ENCODE measurements at regions of chr9 and their contacts with region 1.

Region 1: DNA sequence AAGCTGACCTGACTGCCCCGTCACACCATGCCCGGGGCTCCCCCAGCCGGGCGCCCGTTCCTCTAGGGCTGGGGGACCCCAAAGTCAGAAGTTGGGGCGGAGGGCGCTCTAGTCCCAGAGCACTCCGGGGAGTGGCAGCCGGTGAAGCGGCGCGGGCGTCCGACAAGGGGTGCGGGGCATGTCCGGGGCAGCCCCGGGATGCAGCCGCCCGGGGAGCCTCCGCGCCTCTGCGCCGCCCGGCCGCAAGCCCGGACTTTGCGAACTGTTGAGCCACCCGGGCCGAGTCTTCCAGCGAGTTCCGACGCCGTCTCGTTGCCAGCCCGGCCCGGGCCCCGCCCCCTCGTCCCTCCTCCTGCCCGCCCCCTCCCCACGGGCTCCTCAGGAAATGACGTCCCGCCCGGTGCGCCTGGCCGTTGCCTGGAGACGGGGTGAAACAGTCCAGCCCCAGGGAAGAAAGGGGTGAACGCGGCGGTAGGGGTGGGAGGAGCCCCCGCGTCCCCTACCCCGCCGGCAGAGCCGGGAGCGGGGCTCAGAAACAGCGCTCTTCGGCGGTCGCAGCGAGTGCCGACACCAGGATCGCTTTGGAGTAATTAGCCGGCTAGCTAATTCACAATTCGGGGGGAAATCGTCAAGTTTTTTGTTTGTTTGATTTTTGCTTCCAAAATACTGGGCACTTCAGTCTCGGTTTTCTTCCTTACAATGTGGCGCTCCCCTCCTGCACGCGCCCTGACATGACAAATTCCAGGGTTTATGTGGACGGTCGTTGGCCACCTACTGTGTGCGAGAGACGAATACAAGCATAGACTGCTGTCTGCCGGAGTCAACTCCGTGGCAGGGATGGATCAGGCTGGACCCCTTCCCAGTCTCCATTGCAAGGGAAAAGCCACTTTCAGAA is at the start of gene WHRN:
- DNase-seq: peak; percentile 90 to 97 (median 92)
- H3K4me3 ChIP-seq: peak within 1 kb of the TSS; percentile 70
- H3K4me3 Mint-ChIP-seq: peak within 1 kb of the TSS; percentile 84 to 95 (median 88)
- H3K27ac ChIP-seq: peak within 1 kb of the TSS; percentile 76
- H3K27ac Mint-ChIP-seq: peak within 1 kb of the TSS; percentile 82 to 97 (median 95)
- H3K4me1 ChIP-seq: peaks cover 18% of the 10 kb centered on the region
- H3K4me1 Mint-ChIP-seq: peaks cover 40 to 56% (median 53%) of the 10 kb centered on the region in 3 donors
- H3K27me3 ChIP-seq: peaks cover 9% of the 10 kb centered on the region
- H3K27me3 Mint-ChIP-seq: peaks cover 0 to 16% of the 10 kb centered on the region in 2 donors
- total RNA-seq, gene WHRN: 8.6 to 9.0 TPM

Region 2: GRCh38 chr9:114327749-114328148 is 177.7 kb before region 1 on chr9:
- CTCF ChIA-PET with region 1: no interaction called
- POLR2A ChIA-PET with region 1: no interaction called
- DNase-seq: no peak
- H3K4me3 ChIP-seq: no peak overlapping the region
- H3K4me3 Mint-ChIP-seq: no peak overlapping the region
- H3K27ac ChIP-seq: no peak overlapping the region
- H3K27ac Mint-ChIP-seq: no peak overlapping the region
- H3K4me1 ChIP-seq: no peaks in the 10 kb centered on the region
- H3K4me1 Mint-ChIP-seq: peaks cover 18 to 23% (median 22%) of the 10 kb centered on the region in 3 donors
- H3K27me3 ChIP-seq: no peaks in the 10 kb centered on the region
- H3K27me3 Mint-ChIP-seq: peaks cover 0 to 4% of the 10 kb centered on the region in 2 donors

Region 3: GRCh38 chr9:114385412-114386181 is 119.8 kb before region 1 on chr9:
- CTCF ChIA-PET with region 1: interaction called, 7 read pairs
- POLR2A ChIA-PET with region 1: interaction called, 11 read pairs
- DNase-seq: peak; percentile 80 to 95 (median 94)
- H3K4me3 ChIP-seq: peak overlapping the region; percentile 98
- H3K4me3 Mint-ChIP-seq: peak overlapping the region; percentile 92 to 99 (median 96)
- H3K27ac ChIP-seq: peak overlapping the region; percentile 96
- H3K27ac Mint-ChIP-seq: peak overlapping the region; percentile 93 to 100 (median 98)
- H3K4me1 ChIP-seq: peaks cover 74% of the 10 kb centered on the region
- H3K4me1 Mint-ChIP-seq: peaks cover 67 to 83% (median 71%) of the 10 kb centered on the region in 3 donors
- H3K27me3 ChIP-seq: no peaks in the 10 kb centered on the region
- H3K27me3 Mint-ChIP-seq: peaks cover 0 to 7% of the 10 kb centered on the region in 2 donors

Region 4: DNA sequence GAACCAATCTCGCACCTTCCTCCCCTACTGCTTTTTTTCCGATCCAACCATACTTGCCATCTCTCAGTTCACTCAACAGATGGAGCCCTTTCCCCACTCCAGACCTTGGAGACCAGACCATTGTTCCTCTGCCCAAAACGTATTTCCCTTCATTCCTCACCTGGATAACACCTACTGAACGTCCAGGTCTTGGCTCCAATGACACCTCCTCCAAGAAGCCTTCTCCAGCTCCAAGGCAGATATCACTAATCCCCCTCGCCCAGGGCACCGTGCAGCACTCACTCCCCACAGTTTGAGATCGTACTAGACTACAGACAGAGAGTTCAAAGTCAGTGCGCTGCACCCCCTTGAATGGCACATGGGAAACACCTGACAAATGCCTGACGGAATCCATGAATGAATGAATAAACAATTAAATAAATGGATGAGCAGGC is 70.5 kb before region 1 on chr9:
- CTCF ChIA-PET with region 1: interaction called, 16 read pairs
- POLR2A ChIA-PET with region 1: no interaction called
- DNase-seq: no peak
- H3K4me3 ChIP-seq: no peak overlapping the region
- H3K4me3 Mint-ChIP-seq: no peak overlapping the region
- H3K27ac ChIP-seq: no peak overlapping the region
- H3K27ac Mint-ChIP-seq: no peak overlapping the region
- H3K4me1 ChIP-seq: peaks cover 5% of the 10 kb centered on the region
- H3K4me1 Mint-ChIP-seq: peaks cover 3 to 5% (median 5%) of the 10 kb centered on the region in 3 donors
- H3K27me3 ChIP-seq: no peaks in the 10 kb centered on the region
- H3K27me3 Mint-ChIP-seq: peaks cover 0 to 1% of the 10 kb centered on the region in 2 donors

Region 5: DNA sequence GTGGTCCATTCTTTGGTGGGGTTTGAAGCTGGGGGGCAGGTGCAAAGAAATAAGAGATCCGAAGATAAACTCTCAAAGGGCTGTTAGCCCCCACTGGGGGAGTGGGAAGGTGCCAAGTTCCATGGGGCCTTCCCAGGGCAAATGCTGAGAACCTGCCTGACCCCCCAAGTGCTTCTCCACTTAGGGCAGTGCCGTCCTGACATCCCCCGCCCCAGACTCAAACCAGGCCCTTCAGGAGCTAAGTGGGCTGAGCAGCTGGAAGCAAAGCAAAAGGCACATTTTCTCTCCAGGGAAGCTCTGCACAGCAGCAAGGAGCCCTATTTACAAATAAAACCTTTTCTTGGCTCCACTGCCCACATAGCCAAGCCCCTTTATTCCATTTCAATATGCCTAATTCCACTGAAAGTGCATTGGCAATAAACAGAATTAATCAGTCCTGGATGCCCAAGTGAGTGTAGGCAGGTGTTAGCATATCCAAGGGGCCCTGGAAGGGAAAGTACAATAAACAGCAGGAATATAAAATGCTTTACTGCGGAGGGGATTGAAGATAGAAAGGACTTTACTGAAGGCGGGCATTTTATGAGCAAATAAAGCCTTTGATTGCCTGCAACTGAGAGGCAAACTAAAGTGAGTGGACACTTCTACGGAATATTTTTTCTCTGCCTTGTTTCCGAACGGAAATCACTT is 44.8 kb before region 1 on chr9:
- CTCF ChIA-PET with region 1: no interaction called
- POLR2A ChIA-PET with region 1: no interaction called
- DNase-seq: no peak
- H3K4me3 ChIP-seq: no peak overlapping the region
- H3K4me3 Mint-ChIP-seq: no peak overlapping the region
- H3K27ac ChIP-seq: no peak overlapping the region
- H3K27ac Mint-ChIP-seq: no peak overlapping the region
- H3K4me1 ChIP-seq: no peaks in the 10 kb centered on the region
- H3K4me1 Mint-ChIP-seq: no peaks in the 10 kb centered on the region
- H3K27me3 ChIP-seq: no peaks in the 10 kb centered on the region
- H3K27me3 Mint-ChIP-seq: peaks cover 4 to 12% of the 10 kb centered on the region in 2 donors

Region 6: DNA sequence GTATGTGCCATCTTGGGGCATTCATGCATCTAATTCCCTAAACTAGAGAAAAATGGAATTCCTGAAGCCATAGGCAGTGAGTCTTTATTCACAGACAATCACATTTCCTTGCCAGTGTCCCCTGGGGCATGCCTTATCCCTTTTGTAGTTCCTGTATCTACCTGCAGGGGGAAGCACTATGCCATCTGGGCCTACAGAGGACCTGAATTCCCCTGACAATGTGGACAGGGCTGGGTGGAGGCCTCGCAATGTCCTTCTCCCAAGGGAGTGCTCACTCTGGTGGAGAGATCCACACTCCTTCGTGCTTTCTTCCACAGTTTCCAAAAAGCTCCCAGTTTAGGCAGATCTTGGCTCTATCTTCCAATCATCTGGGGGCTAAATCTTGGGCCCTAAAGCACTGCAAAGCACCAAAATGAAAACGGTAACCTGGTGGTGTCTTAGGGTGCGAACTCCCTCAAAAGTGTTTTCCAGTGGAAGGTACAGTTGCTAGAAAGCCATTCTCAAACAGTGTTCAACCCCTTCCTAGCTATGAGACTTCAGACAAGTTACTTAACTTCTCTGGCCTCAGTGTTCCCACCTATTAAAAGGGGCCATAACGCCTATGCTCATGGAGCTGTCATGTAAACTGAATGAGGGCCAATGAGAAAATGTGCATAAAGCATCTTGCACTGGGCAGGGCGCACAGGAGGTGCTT is 17.7 kb before region 1 on chr9:
- CTCF ChIA-PET with region 1: interaction called, 54 read pairs
- POLR2A ChIA-PET with region 1: interaction called, 7 read pairs
- DNase-seq: peak; percentile 16 to 75 (median 61)
- H3K4me3 ChIP-seq: no peak overlapping the region
- H3K4me3 Mint-ChIP-seq: no peak overlapping the region
- H3K27ac ChIP-seq: no peak overlapping the region
- H3K27ac Mint-ChIP-seq: peak overlapping the region in 3 of 8 donors; percentile 7 to 25 (median 12)
- H3K4me1 ChIP-seq: peaks cover 11% of the 10 kb centered on the region
- H3K4me1 Mint-ChIP-seq: peaks cover 24 to 33% (median 26%) of the 10 kb centered on the region in 3 donors
- H3K27me3 ChIP-seq: no peaks in the 10 kb centered on the region
- H3K27me3 Mint-ChIP-seq: peaks cover 0 to 2% of the 10 kb centered on the region in 2 donors

Region 7: DNA sequence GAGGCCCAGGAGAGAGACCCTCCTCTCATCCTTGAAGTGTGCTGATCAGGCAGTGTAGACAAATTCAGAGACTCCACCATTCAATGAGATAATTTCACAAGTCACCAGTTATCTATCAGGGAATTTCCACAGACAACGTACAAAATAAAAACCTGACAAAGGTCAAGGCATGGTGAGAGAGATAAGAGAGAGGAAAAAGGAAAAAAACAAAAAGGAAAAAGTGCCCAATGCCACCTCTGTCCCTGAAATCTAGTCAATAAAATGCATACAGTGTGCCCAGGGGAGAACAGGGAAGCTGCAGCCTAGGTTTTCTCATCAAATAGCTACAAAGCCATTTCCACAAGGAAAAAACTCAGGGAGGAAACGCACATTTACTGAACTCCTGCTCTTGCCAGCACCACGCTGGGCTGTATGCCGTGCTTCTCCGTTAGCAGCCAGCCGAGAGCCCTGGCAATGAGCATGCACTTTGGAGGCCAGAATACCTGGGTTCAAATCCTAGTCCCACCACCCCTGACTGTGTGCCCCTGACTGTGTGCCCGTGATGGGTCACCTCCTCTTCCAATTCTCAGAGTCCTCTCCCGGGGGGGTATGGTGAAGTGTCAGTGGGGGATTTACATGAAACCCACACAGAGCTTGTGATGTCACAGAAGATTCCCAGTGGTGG is 11.8 kb before region 1 on chr9:
- CTCF ChIA-PET with region 1: interaction called, 54 read pairs
- POLR2A ChIA-PET with region 1: interaction called, 3 read pairs
- DNase-seq: no peak
- H3K4me3 ChIP-seq: no peak overlapping the region
- H3K4me3 Mint-ChIP-seq: no peak overlapping the region
- H3K27ac ChIP-seq: no peak overlapping the region
- H3K27ac Mint-ChIP-seq: peak overlapping the region in 3 of 8 donors; percentile 6 to 21 (median 9)
- H3K4me1 ChIP-seq: peaks cover 21% of the 10 kb centered on the region
- H3K4me1 Mint-ChIP-seq: peaks cover 39 to 41% (median 39%) of the 10 kb centered on the region in 3 donors
- H3K27me3 ChIP-seq: no peaks in the 10 kb centered on the region
- H3K27me3 Mint-ChIP-seq: peaks cover 0 to 6% of the 10 kb centered on the region in 2 donors

Region 8: GRCh38 chr9:114532561-114533237 is 27.3 kb after region 1 on chr9:
- CTCF ChIA-PET with region 1: no interaction called
- POLR2A ChIA-PET with region 1: no interaction called
- DNase-seq: no peak
- H3K4me3 ChIP-seq: no peak overlapping the region
- H3K4me3 Mint-ChIP-seq: no peak overlapping the region
- H3K27ac ChIP-seq: no peak overlapping the region
- H3K27ac Mint-ChIP-seq: no peak overlapping the region
- H3K4me1 ChIP-seq: no peaks in the 10 kb centered on the region
- H3K4me1 Mint-ChIP-seq: peaks cover 0 to 2% (median 0%) of the 10 kb centered on the region in 3 donors
- H3K27me3 ChIP-seq: no peaks in the 10 kb centered on the region
- H3K27me3 Mint-ChIP-seq: peaks cover 0 to 33% of the 10 kb centered on the region in 2 donors

Region 9: GRCh38 chr9:114587385-114588202 is 82.2 kb after region 1 on chr9 and contains the start of gene ATP6V1G1:
- CTCF ChIA-PET with region 1: interaction called, 16 read pairs
- POLR2A ChIA-PET with region 1: interaction called, 5 read pairs
- DNase-seq: peak; percentile 96 to 99 (median 99)
- H3K4me3 ChIP-seq: peak within 1 kb of the TSS; percentile 81
- H3K4me3 Mint-ChIP-seq: peak within 1 kb of the TSS; percentile 97 to 100 (median 99)
- H3K27ac ChIP-seq: peak within 1 kb of the TSS; percentile 91
- H3K27ac Mint-ChIP-seq: peak within 1 kb of the TSS; percentile 98 to 100 (median 99)
- H3K4me1 ChIP-seq: peaks cover 37% of the 10 kb centered on the region
- H3K4me1 Mint-ChIP-seq: peaks cover 51 to 55% (median 51%) of the 10 kb centered on the region in 3 donors
- H3K27me3 ChIP-seq: no peaks in the 10 kb centered on the region
- H3K27me3 Mint-ChIP-seq: peaks cover 0 to 5% of the 10 kb centered on the region in 2 donors
- total RNA-seq, gene ATP6V1G1: 48.2 to 49.0 TPM

Region 10: GRCh38 chr9:114653556-114654159 is 148.2 kb after region 1 on chr9:
- CTCF ChIA-PET with region 1: interaction called, 30 read pairs
- POLR2A ChIA-PET with region 1: interaction called, 3 read pairs
- DNase-seq: peak; percentile 74 to 84 (median 74)
- H3K4me3 ChIP-seq: no peak overlapping the region
- H3K4me3 Mint-ChIP-seq: no peak overlapping the region
- H3K27ac ChIP-seq: no peak overlapping the region
- H3K27ac Mint-ChIP-seq: peak overlapping the region in 1 of 8 donors; percentile 35
- H3K4me1 ChIP-seq: peaks cover 10% of the 10 kb centered on the region
- H3K4me1 Mint-ChIP-seq: peaks cover 6 to 14% (median 9%) of the 10 kb centered on the region in 3 donors
- H3K27me3 ChIP-seq: no peaks in the 10 kb centered on the region
- H3K27me3 Mint-ChIP-seq: no peaks in the 10 kb centered on the region

Region 11: GRCh38 chr9:114674798-114675540 is 169.5 kb after region 1 on chr9:
- CTCF ChIA-PET with region 1: no interaction called
- POLR2A ChIA-PET with region 1: no interaction called
- DNase-seq: no peak
- H3K4me3 ChIP-seq: no peak overlapping the region
- H3K4me3 Mint-ChIP-seq: no peak overlapping the region
- H3K27ac ChIP-seq: no peak overlapping the region
- H3K27ac Mint-ChIP-seq: peak overlapping the region in 1 of 8 donors; percentile 89
- H3K4me1 ChIP-seq: no peaks in the 10 kb centered on the region
- H3K4me1 Mint-ChIP-seq: no peaks in the 10 kb centered on the region
- H3K27me3 ChIP-seq: peaks cover 9% of the 10 kb centered on the region
- H3K27me3 Mint-ChIP-seq: peaks cover 11 to 32% of the 10 kb centered on the region in 2 donors